Activated T-helper 1 cell treated with anti-CD3 and anti-CD28 coated beads, Interleukin-12 subunit alpha, Interleukin-12 subunit beta, Interleukin-2, Interleukin-4 antibody, amounts not matched to agents 30 ng/mL and 10 ng/mL and 1 ng/mL, durations not matched to agents 14 hours and 24 hours and 36 hours (primary cell): ENCODE measurements at regions of chr4 and their contacts with region 1.

Region 1: GRCh38 chr4:6673660-6674499 is 19.8 kb upstream of the S100P start:
- DNase-seq: peak; percentile 93
- H3K4me3 Mint-ChIP-seq: peak overlapping the region; percentile 98
- H3K27ac Mint-ChIP-seq: peak overlapping the region; percentile 97
- H3K4me1 Mint-ChIP-seq: peaks cover 48% of the 10 kb centered on the region
- H3K27me3 Mint-ChIP-seq: no peaks in the 10 kb centered on the region

Region 2: GRCh38 chr4:6620891-6621555 is 52.9 kb before region 1 on chr4:
- intact Hi-C with region 1: no loop called
- DNase-seq: no peak
- H3K4me3 Mint-ChIP-seq: no peak overlapping the region
- H3K27ac Mint-ChIP-seq: no peak overlapping the region
- H3K4me1 Mint-ChIP-seq: no peaks in the 10 kb centered on the region
- H3K27me3 Mint-ChIP-seq: no peaks in the 10 kb centered on the region

Region 3: GRCh38 chr4:6688879-6689505 is 15.1 kb after region 1 on chr4:
- intact Hi-C with region 1: loop called (anchors 1 kb)
- DNase-seq: peak; percentile 70
- H3K4me3 Mint-ChIP-seq: peak overlapping the region; percentile 83
- H3K27ac Mint-ChIP-seq: peak overlapping the region; percentile 96
- H3K4me1 Mint-ChIP-seq: peaks cover 80% of the 10 kb centered on the region
- H3K27me3 Mint-ChIP-seq: no peaks in the 10 kb centered on the region

Region 4: DNA sequence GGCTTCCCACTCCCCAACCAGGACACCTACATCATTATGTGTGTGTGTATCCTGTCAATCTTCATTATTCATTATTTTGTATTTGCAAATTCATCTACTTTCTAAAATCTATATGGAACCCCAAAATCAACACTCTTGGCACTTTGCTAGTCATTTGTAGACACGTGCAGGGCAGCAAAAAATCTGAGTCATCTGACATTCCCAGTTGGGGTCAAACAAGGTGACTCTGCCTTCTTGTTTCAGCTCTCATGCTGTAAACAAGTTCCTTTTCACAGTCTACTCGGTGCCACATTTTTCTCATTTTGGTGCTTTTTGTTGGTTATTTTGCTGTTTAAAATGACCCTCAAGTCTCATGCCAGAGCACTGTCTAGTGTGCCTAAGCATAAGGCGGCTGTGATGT is 29.9 kb after region 1 on chr4:
- intact Hi-C with region 1: loop called (anchors 1 kb)
- DNase-seq: no peak
- H3K4me3 Mint-ChIP-seq: no peak overlapping the region
- H3K27ac Mint-ChIP-seq: peak overlapping the region; percentile 32
- H3K4me1 Mint-ChIP-seq: peaks cover 63% of the 10 kb centered on the region
- H3K27me3 Mint-ChIP-seq: no peaks in the 10 kb centered on the region

Region 5: GRCh38 chr4:6716018-6716911 is 42.4 kb after region 1 on chr4 and contains the start of gene BLOC1S4:
- intact Hi-C with region 1: loop called (anchors 1 kb)
- DNase-seq: peak; percentile 87
- H3K4me3 Mint-ChIP-seq: peak within 1 kb of the TSS; percentile 93
- H3K27ac Mint-ChIP-seq: peak within 1 kb of the TSS; percentile 88
- H3K4me1 Mint-ChIP-seq: peaks cover 27% of the 10 kb centered on the region
- H3K27me3 Mint-ChIP-seq: peaks cover 8% of the 10 kb centered on the region
- total RNA-seq, gene BLOC1S4: 21.5 and 23.6 TPM in 2 replicates

Region 6: GRCh38 chr4:6873792-6874461 is 200.0 kb after region 1 on chr4:
- intact Hi-C with region 1: loop called (anchors 1 kb)
- DNase-seq: peak; percentile 64
- H3K4me3 Mint-ChIP-seq: no peak overlapping the region
- H3K27ac Mint-ChIP-seq: no peak overlapping the region
- H3K4me1 Mint-ChIP-seq: peaks cover 16% of the 10 kb centered on the region
- H3K27me3 Mint-ChIP-seq: no peaks in the 10 kb centered on the region